ENCODE measurements at regions of chr2 and their contacts with region 1.

Region 1: GRCh38 chr2:11465497-11466406 is at the start of gene E2F6:
- DNase-seq: peak; percentile 84 to 91
- ATAC-seq: peak; percentile 84 to 86
- H3K4me3 ChIP-seq: peak within 1 kb of the TSS; percentile 68 to 91 (median 80)
- H3K27ac ChIP-seq: peak within 1 kb of the TSS; percentile 91 to 100 (median 98)
- H3K4me1 ChIP-seq: peaks cover 42 to 52% of the 10 kb centered on the region in 2 donors
- H3K27me3 ChIP-seq: no peaks in the 10 kb centered on the region
- CTCF ChIP-seq: peak in 1 of 5 experiments; percentile 17
- POLR2A ChIP-seq: peak; percentile 93 to 94
- total RNA-seq, gene E2F6: 29.4 to 46.1 (median 36.2) TPM

Region 2: GRCh38 chr2:10057231-10058107 is 1408.3 kb before region 1 on chr2:
- in situ Hi-C with region 1: no loop called
- intact Hi-C with region 1: no loop called
- DNase-seq: no peak
- ATAC-seq: peak; percentile 14 to 19
- H3K4me3 ChIP-seq: peak overlapping the region in 1 of 4 donors; percentile 21
- H3K27ac ChIP-seq: peak overlapping the region in 1 of 4 donors; percentile 52
- H3K4me1 ChIP-seq: peaks cover 23 to 35% of the 10 kb centered on the region in 2 donors
- H3K27me3 ChIP-seq: no peaks in the 10 kb centered on the region
- CTCF ChIP-seq: no peak
- POLR2A ChIP-seq: no peak

Region 3: GRCh38 chr2:11154923-11155380 is 310.8 kb before region 1 on chr2:
- in situ Hi-C with region 1: no loop called
- intact Hi-C with region 1: loop called (anchors 5 kb)
- DNase-seq: peak; percentile 97 to 99
- ATAC-seq: peak; percentile 73 to 81
- H3K4me3 ChIP-seq: peak overlapping the region; percentile 54 to 82 (median 74)
- H3K27ac ChIP-seq: peak overlapping the region; percentile 87 to 96 (median 91)
- H3K4me1 ChIP-seq: peaks cover 3 to 5% of the 10 kb centered on the region in 2 donors
- H3K27me3 ChIP-seq: no peaks in the 10 kb centered on the region
- CTCF ChIP-seq: no peak
- POLR2A ChIP-seq: no peak

Region 4: GRCh38 chr2:11743846-11744553 is 278.2 kb after region 1 on chr2:
- in situ Hi-C with region 1: no loop called
- intact Hi-C with region 1: loop called (anchors 10 kb)
- DNase-seq: peak; percentile 97 to 98
- ATAC-seq: peak; percentile 80 to 82
- H3K4me3 ChIP-seq: peak overlapping the region; percentile 41 to 48 (median 46)
- H3K27ac ChIP-seq: peak overlapping the region; percentile 92 to 95 (median 94)
- H3K4me1 ChIP-seq: peaks cover 33 to 55% of the 10 kb centered on the region in 2 donors
- H3K27me3 ChIP-seq: no peaks in the 10 kb centered on the region
- CTCF ChIP-seq: no peak
- POLR2A ChIP-seq: peak; percentile 55 to 62

Region 5: DNA sequence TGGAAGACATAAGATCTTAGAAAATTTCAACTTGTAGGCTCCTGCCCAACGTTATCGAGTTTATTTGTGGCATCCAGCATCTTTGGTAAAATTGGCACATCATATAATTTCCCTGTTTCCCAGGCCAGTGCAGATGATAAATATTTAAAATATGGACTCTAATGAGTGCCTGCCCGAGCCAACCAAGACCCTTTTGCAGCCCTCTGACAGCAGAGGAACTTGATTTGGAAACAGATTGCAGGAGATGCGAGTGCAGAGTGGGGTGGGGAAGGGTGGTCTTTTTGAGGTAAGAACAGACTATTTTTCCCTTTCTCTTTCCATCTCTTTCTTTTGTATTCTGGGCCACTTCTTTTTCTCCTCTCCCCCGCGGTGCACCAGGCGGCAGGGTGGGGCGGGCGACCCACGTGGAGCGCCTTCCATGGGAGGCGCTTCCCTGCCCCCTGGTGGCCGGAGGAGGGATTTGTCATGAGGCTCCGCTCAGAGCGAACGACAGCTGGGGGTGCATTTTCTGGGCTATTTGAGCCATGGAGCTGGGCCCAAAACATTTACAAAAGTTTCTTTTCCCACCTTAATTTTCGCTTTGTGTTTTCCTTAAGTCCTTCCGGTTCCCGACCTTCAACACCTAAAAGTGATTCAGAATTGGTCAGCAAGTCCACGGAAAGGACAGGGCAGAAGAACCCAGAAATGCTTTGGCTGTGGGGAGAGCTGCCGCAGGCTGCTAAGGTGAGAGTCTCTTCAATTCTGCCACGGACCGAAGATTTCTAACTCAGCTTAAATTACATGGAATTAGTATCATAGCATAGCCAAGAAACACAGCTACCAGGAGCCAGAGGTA is 313.4 kb after region 1 on chr2:
- in situ Hi-C with region 1: loop called in 1 of 4 experiments (anchors 25 kb)
- intact Hi-C with region 1: no loop called
- DNase-seq: peak; percentile 59 to 76
- ATAC-seq: peak; percentile 72 to 87
- H3K4me3 ChIP-seq: no peak overlapping the region
- H3K27ac ChIP-seq: peak overlapping the region; percentile 58 to 70 (median 66)
- H3K4me1 ChIP-seq: peaks cover 40 to 51% of the 10 kb centered on the region in 2 donors
- H3K27me3 ChIP-seq: no peaks in the 10 kb centered on the region
- CTCF ChIP-seq: peak; percentile 97 to 99 (median 98)
- POLR2A ChIP-seq: no peak